Activated T-helper 2 cell treated with anti-CD3 and anti-CD28 coated beads, Interferon-gamma antibody, Interleukin-2, Interleukin-4, amounts not matched to agents 10 μg/mL and 5 μg/mL and 100 μg/mL, durations not matched to agents 14 hours and 24 hours and 36 hours (primary cell): ENCODE measurements at regions of chr19 and their contacts with region 1.

Region 1: DNA sequence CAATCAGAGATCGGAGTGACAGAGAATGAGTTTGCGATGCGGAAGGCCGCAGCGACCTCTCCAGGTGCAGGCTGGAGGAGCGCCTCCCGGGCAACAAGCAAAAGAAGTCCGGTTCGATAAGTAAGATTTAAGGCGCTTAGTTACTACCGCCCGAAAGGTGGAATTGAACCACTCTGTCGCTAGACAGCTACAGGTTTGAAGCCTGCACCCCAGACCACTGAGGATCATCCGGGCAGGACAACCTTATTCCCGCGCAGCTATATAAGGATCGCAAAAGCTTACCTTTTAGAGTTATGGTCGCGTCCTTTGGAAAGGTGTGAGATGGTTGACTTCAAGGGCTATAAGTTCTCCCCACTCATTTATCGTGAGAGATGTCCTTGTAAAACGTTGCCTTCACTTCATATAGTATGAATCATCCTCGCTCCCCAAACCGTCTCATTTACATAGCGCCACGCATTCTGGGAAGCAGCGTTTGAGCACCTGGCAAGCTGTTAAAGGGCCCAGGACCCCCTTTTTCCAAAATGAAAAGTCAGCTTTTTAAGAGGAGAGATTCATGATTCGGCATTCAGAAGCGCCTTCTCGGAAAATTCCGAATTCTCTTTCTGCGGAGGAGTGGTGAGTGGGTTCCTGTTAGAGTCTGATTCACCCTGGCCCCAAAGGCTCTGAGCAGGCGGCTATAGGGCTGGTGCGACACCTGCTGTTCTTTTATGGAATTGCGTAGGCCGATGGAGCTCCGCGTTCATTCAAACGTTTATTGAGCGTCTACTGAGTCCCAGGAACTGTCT is 10.8 kb downstream of the FOSB start:
- DNase-seq: peak; percentile 88
- H3K4me3 Mint-ChIP-seq: peak overlapping the region; percentile 67
- H3K27ac Mint-ChIP-seq: peak overlapping the region; percentile 98
- H3K4me1 Mint-ChIP-seq: peaks cover 27% of the 10 kb centered on the region
- H3K27me3 Mint-ChIP-seq: peaks cover 25% of the 10 kb centered on the region

Region 2: DNA sequence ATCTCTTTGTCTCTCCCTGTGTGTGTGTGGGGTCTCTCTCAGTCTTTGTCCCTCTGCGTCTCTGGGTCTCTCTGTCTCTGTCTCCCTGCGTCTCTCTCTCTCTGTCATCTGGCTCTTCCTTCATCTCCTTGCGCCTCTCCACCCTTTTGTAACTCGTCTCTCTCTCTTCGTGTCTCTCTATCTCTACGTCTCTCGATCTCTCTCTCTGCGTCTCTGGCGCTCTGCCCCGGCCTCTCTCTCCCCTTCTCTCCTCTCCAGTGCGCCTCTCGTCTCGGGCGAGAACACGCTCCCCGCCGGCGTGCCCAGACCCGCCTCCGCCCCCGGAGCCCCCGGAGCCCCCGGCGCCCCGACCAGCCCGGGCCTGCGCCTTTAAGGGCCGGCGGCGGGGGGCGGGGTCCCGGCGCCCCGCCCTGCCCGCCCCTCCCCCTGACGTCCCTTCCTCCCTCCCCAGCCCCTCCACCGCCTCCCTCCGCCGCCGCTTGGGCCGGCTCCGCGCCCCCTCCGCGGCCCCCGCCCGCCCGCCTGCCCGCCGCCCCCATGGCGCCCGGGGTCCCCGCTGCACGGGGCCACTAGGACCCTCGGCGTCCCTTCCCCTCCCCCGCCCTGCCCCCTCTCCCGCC is 227.7 kb before region 1 on chr19 and contains the start of gene MARK4:
- intact Hi-C with region 1: loop called (anchors 5 kb)
- DNase-seq: peak; percentile 46
- H3K4me3 Mint-ChIP-seq: peak within 1 kb of the TSS; percentile 85
- H3K27ac Mint-ChIP-seq: peak within 1 kb of the TSS; percentile 65
- H3K4me1 Mint-ChIP-seq: peaks cover 19% of the 10 kb centered on the region
- H3K27me3 Mint-ChIP-seq: peaks cover 2% of the 10 kb centered on the region
- total RNA-seq, gene MARK4: 25.6 and 28.9 TPM in 2 replicates

Region 3: GRCh38 chr19:45370410-45371204 is 108.0 kb before region 1 on chr19 and contains the start of gene ERCC2:
- intact Hi-C with region 1: loop called (anchors 1 kb)
- DNase-seq: peak; percentile 100
- H3K4me3 Mint-ChIP-seq: peak within 1 kb of the TSS; percentile 87
- H3K27ac Mint-ChIP-seq: peak within 1 kb of the TSS; percentile 99
- H3K4me1 Mint-ChIP-seq: peaks cover 14% of the 10 kb centered on the region
- H3K27me3 Mint-ChIP-seq: no peaks in the 10 kb centered on the region
- total RNA-seq, gene ERCC2: 32.6 and 34.5 TPM in 2 replicates

Region 4: DNA sequence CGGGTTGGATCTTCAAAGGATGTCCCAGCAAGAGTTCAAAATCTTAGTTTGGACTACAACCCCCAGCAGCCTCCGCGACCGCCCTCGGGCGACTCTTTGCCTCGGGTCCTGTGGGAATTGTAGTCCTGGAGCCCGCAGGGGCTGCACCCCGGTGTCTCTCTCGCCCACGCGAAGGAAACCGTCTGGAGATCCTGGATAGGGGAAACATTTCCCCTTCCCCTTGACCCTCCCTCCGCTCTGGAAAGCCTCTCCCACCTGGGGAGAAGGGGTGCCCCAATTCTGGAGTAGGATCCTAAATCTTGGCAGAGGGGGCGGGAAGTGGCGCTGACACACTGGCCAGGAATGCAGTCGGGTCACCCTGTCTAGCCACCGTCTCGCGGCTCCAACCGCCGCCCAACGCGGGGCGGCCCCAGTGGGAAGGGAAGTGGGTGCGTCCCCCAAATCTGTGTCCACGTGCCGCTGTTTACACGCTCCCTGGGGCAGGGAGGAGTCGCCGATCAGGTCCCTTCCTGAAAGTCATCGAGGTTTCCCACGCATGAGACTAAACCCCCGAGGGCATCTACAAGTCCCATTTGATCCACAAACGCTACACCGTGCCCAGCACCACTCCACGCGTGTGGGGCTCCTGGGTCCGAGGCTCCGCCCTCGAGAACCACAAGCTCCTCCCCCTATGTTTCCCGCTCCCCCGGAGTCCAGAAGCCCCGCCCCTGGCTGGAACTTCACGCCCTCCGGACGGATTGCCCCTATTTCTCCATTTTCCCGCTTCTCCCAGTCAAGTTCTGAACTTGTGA is 73.0 kb before region 1 on chr19:
- intact Hi-C with region 1: loop called (anchors 2 kb)
- DNase-seq: peak; percentile 77
- H3K4me3 Mint-ChIP-seq: peak overlapping the region; percentile 99
- H3K27ac Mint-ChIP-seq: peak overlapping the region; percentile 92
- H3K4me1 Mint-ChIP-seq: peaks cover 37% of the 10 kb centered on the region
- H3K27me3 Mint-ChIP-seq: peaks cover 11% of the 10 kb centered on the region

Region 5: GRCh38 chr19:45439569-45440254 is 38.9 kb before region 1 on chr19:
- intact Hi-C with region 1: loop called (anchors 1 kb)
- DNase-seq: peak; percentile 78
- H3K4me3 Mint-ChIP-seq: peak overlapping the region; percentile 69
- H3K27ac Mint-ChIP-seq: peak overlapping the region; percentile 67
- H3K4me1 Mint-ChIP-seq: peaks cover 23% of the 10 kb centered on the region
- H3K27me3 Mint-ChIP-seq: peaks cover 2% of the 10 kb centered on the region

Region 6: DNA sequence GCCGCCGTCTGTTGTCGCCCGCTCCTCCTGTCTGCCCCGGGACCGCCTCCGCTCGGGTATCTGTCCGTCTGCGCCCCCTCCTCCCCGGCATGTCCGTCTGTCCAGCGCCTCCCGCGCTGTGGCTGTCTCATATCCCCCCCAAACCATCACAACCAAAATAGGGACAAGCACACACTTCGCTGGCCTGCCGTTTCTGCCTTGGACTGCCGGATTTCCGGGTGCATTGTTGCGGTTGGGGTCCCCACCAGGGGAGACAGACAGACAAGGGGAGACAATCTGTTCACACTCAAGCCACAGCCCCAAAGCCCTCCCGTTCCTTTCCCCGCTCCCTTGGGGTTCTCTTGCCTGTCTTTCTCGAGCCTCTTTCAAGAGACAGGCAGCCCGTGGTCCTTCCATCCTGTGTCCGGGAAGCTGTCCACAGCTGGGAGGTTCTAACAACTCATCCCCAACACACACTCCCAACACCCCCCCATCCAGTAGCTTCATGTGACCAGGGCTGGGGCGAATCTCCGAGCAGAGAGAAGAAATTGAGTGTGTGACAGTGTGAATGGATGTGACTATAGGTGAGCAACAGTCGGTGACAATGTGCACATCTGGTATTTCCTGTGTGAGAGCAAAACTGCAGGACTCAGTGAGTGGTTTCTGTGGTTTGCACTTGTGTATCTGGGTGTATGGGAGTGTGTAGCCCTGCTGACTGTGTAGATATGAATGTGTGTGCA is 27.4 kb before region 1 on chr19:
- intact Hi-C with region 1: loop called (anchors 1 kb)
- DNase-seq: peak; percentile 55
- H3K4me3 Mint-ChIP-seq: peak overlapping the region; percentile 78
- H3K27ac Mint-ChIP-seq: peak overlapping the region; percentile 83
- H3K4me1 Mint-ChIP-seq: peaks cover 47% of the 10 kb centered on the region
- H3K27me3 Mint-ChIP-seq: peaks cover 4% of the 10 kb centered on the region

Region 7: GRCh38 chr19:45872095-45872919 is 393.7 kb after region 1 on chr19:
- intact Hi-C with region 1: no loop called
- DNase-seq: no peak
- H3K4me3 Mint-ChIP-seq: no peak overlapping the region
- H3K27ac Mint-ChIP-seq: no peak overlapping the region
- H3K4me1 Mint-ChIP-seq: peaks cover 9% of the 10 kb centered on the region
- H3K27me3 Mint-ChIP-seq: peaks cover 14% of the 10 kb centered on the region

Region 8: GRCh38 chr19:45882652-45883585 is 404.3 kb after region 1 on chr19:
- intact Hi-C with region 1: no loop called
- DNase-seq: peak; percentile 81
- H3K4me3 Mint-ChIP-seq: peak overlapping the region; percentile 66
- H3K27ac Mint-ChIP-seq: peak overlapping the region; percentile 18
- H3K4me1 Mint-ChIP-seq: peaks cover 21% of the 10 kb centered on the region
- H3K27me3 Mint-ChIP-seq: no peaks in the 10 kb centered on the region